IMR-90 (cell line): ENCODE measurements at regions of chr2 and their contacts with region 1.

Region 1: GRCh38 chr2:163345908-163346573 is 389.8 kb downstream of the FIGN start:
- DNase-seq: peak; percentile 50
- ATAC-seq: no peak
- H3K4me3 ChIP-seq: no peak overlapping the region
- H3K27ac ChIP-seq: no peak overlapping the region
- H3K4me1 ChIP-seq: peaks cover 10% of the 10 kb centered on the region
- H3K27me3 ChIP-seq: no peaks in the 10 kb centered on the region
- CTCF ChIP-seq: peak; percentile 77
- POLR2A ChIP-seq: no peak
- RAD21 ChIP-seq: peak; percentile 66

Region 2: GRCh38 chr2:163191372-163191771 is 154.7 kb before region 1 on chr2:
- CTCF ChIA-PET with region 1: interaction called, 3 read pairs
- POLR2A ChIA-PET with region 1: interaction called, 3 read pairs
- dilution Hi-C with region 1: no loop called
- in situ Hi-C with region 1: no loop called
- intact Hi-C with region 1: loop called (anchors 5 kb)
- DNase-seq: peak; percentile 50
- ATAC-seq: peak; percentile 46; the same call in 1 of the 2 replicates
- H3K4me3 ChIP-seq: no peak overlapping the region
- H3K27ac ChIP-seq: no peak overlapping the region
- H3K4me1 ChIP-seq: no peaks in the 10 kb centered on the region
- H3K27me3 ChIP-seq: no peaks in the 10 kb centered on the region
- CTCF ChIP-seq: peak; percentile 67
- POLR2A ChIP-seq: no peak
- RAD21 ChIP-seq: peak; percentile 73

Region 3: DNA sequence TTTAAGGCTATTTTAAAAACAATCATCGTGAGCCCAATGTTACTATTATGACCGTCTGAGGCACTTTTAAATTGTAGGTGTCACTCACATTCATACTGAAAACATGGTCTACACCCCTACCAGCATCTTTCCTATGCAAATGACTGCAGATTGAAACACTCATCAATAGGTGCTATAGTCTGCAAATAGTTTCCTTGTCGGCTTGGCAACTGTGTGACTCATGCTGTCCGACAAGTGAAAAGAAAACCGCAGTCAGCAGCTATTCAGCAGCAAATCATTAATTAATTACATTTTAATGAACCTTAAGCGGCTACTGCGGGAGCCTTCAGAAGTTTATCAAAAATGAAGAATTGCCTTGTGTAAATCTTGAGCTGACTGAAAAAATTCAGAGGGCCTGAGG is 255.3 kb after region 1 on chr2:
- CTCF ChIA-PET with region 1: interaction called, 3 read pairs
- POLR2A ChIA-PET with region 1: no interaction called
- dilution Hi-C with region 1: no loop called
- in situ Hi-C with region 1: no loop called
- intact Hi-C with region 1: loop called (anchors 5 kb)
- DNase-seq: peak; percentile 24
- ATAC-seq: no peak
- H3K4me3 ChIP-seq: no peak overlapping the region
- H3K27ac ChIP-seq: no peak overlapping the region
- H3K4me1 ChIP-seq: peaks cover 3% of the 10 kb centered on the region
- H3K27me3 ChIP-seq: no peaks in the 10 kb centered on the region
- CTCF ChIP-seq: no peak
- POLR2A ChIP-seq: no peak
- RAD21 ChIP-seq: no peak

Region 4: GRCh38 chr2:163735685-163736432 is 389.8 kb after region 1 on chr2 and contains the start of gene FIGN:
- CTCF ChIA-PET with region 1: interaction called, 10 read pairs
- POLR2A ChIA-PET with region 1: interaction called, 4 read pairs
- dilution Hi-C with region 1: no loop called
- in situ Hi-C with region 1: no loop called
- intact Hi-C with region 1: loop called (anchors 1 kb)
- DNase-seq: peak; percentile 82
- ATAC-seq: peak; percentile 88
- H3K4me3 ChIP-seq: peak within 1 kb of the TSS; percentile 55
- H3K27ac ChIP-seq: peak within 1 kb of the TSS; percentile 81
- H3K4me1 ChIP-seq: peaks cover 2% of the 10 kb centered on the region
- H3K27me3 ChIP-seq: peaks cover 3% of the 10 kb centered on the region; the same call in 1 of the 2 replicates
- CTCF ChIP-seq: no peak
- POLR2A ChIP-seq: peak; percentile 70; the same call in 1 of the 2 replicates
- RAD21 ChIP-seq: no peak
- total RNA-seq, gene FIGN: 0.56 and 0.90 TPM in 2 replicates

Region 5: GRCh38 chr2:164061129-164061746 is 715.2 kb after region 1 on chr2:
- CTCF ChIA-PET with region 1: interaction called, 11 read pairs
- POLR2A ChIA-PET with region 1: no interaction called
- dilution Hi-C with region 1: no loop called
- in situ Hi-C with region 1: no loop called
- intact Hi-C with region 1: loop called (anchors 1 kb)
- DNase-seq: peak; percentile 21
- ATAC-seq: peak; percentile 59; the same call in 1 of the 2 replicates
- H3K4me3 ChIP-seq: no peak overlapping the region
- H3K27ac ChIP-seq: no peak overlapping the region
- H3K4me1 ChIP-seq: no peaks in the 10 kb centered on the region
- H3K27me3 ChIP-seq: no peaks in the 10 kb centered on the region
- CTCF ChIP-seq: peak; percentile 66
- POLR2A ChIP-seq: no peak
- RAD21 ChIP-seq: peak; percentile 66

Region 6: DNA sequence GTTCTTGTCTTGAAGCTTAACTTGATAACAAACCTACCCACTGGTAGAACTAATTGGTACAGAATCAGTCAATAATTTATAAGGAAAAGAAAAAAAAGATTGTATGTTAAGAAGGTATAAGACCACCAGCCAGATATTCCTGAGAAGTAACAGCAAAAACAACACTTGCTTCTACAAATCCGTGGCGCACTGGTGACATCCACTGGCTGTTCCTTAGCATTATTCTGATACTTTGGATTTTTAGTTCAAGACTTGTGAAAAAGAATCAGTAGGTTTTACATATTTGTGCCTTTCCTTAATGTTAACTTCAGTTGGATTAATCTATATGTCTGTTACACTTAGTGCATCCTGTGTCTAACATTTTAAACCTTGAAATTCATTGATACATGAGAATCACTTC is 1133.4 kb after region 1 on chr2:
- CTCF ChIA-PET with region 1: no interaction called
- POLR2A ChIA-PET with region 1: no interaction called
- dilution Hi-C with region 1: no loop called
- in situ Hi-C with region 1: no loop called
- intact Hi-C with region 1: loop called (anchors 10 kb)
- DNase-seq: peak; percentile 22
- ATAC-seq: no peak
- H3K4me3 ChIP-seq: no peak overlapping the region
- H3K27ac ChIP-seq: no peak overlapping the region
- H3K4me1 ChIP-seq: no peaks in the 10 kb centered on the region
- H3K27me3 ChIP-seq: no peaks in the 10 kb centered on the region
- CTCF ChIP-seq: peak; percentile 53
- POLR2A ChIP-seq: no peak
- RAD21 ChIP-seq: peak; percentile 60

Region 7: GRCh38 chr2:164717000-164717803 is 1371.2 kb after region 1 on chr2:
- CTCF ChIA-PET with region 1: no interaction called
- POLR2A ChIA-PET with region 1: no interaction called
- dilution Hi-C with region 1: no loop called
- in situ Hi-C with region 1: no loop called
- intact Hi-C with region 1: loop called (anchors 5 kb)
- DNase-seq: peak; percentile 35
- ATAC-seq: no peak
- H3K4me3 ChIP-seq: no peak overlapping the region
- H3K27ac ChIP-seq: no peak overlapping the region
- H3K4me1 ChIP-seq: no peaks in the 10 kb centered on the region
- H3K27me3 ChIP-seq: no peaks in the 10 kb centered on the region
- CTCF ChIP-seq: peak; percentile 70
- POLR2A ChIP-seq: no peak
- RAD21 ChIP-seq: peak; percentile 57